ENCODE measurements at regions of chr1 and their contacts with region 1.

Region 1: DNA sequence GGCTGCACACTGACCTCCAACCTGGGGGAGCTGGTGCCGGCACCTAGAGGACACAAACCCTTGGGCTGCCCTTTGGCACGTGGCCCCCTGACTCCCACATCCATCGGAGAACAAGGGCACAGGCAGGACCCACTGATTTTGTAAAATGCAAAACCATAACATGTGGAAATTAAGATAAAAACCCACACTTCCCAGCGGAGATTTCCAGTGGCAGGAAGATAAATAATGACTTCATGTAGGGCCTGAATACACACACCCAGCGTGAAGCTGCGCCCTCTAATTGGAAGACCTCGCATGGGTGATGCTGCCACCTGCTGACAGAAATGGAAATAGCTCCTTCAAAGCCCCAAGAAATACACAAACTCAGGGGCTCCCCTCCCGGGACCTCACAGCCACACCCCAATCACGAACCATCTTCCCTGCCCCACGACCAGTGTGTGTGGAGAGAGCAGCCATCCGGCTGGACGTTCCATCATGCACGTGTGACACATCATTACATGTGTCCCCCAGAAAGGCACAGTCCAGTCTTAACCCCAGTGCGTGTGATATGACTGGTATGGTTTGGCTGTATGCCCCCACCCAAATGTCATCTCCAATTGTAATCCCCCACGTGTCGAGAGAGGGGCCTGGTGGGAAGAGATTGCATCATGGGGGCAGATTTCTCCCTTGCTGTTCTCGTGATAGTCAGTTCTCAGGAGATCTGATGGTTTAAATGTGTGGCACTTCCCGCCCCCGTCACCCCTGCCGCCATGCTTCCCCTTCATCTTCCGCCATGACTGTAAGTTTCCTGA is 5.7 kb upstream of the TPRG1L start:
- DNase-seq: peak; percentile 61
- H3K4me3 Mint-ChIP-seq: no peak overlapping the region
- H3K27ac Mint-ChIP-seq: no peak overlapping the region
- H3K4me1 Mint-ChIP-seq: peaks cover 21% of the 10 kb centered on the region
- H3K27me3 Mint-ChIP-seq: peaks cover 12% of the 10 kb centered on the region

Region 2: GRCh38 chr1:3453203-3453761 is 165.8 kb before region 1 on chr1:
- intact Hi-C with region 1: loop called (anchors 1 kb)
- DNase-seq: peak; percentile 56
- H3K4me3 Mint-ChIP-seq: no peak overlapping the region
- H3K27ac Mint-ChIP-seq: no peak overlapping the region
- H3K4me1 Mint-ChIP-seq: no peaks in the 10 kb centered on the region
- H3K27me3 Mint-ChIP-seq: peaks cover 12% of the 10 kb centered on the region

Region 3: GRCh38 chr1:3491291-3492246 is 127.5 kb before region 1 on chr1:
- intact Hi-C with region 1: loop called (anchors 1 kb)
- DNase-seq: peak; percentile 70
- H3K4me3 Mint-ChIP-seq: no peak overlapping the region
- H3K27ac Mint-ChIP-seq: no peak overlapping the region
- H3K4me1 Mint-ChIP-seq: no peaks in the 10 kb centered on the region
- H3K27me3 Mint-ChIP-seq: no peaks in the 10 kb centered on the region

Region 4: GRCh38 chr1:3564921-3565827 is 53.9 kb before region 1 on chr1:
- intact Hi-C with region 1: loop called (anchors 1 kb)
- DNase-seq: no peak
- H3K4me3 Mint-ChIP-seq: no peak overlapping the region
- H3K27ac Mint-ChIP-seq: no peak overlapping the region
- H3K4me1 Mint-ChIP-seq: no peaks in the 10 kb centered on the region
- H3K27me3 Mint-ChIP-seq: no peaks in the 10 kb centered on the region